ENCODE measurements at regions of chr1 and their contacts with region 1.

Region 1: GRCh38 chr1:52552505-52553361 is at the start of gene TUT4:
- DNase-seq: peak; percentile 94
- H3K4me3 ChIP-seq: peak within 1 kb of the TSS; percentile 83 to 99 (median 94)
- H3K27ac ChIP-seq: peak within 1 kb of the TSS; percentile 88 to 98 (median 91)
- H3K4me1 ChIP-seq: peaks cover 10 to 33% (median 31%) of the 10 kb centered on the region in 4 donors
- H3K27me3 ChIP-seq: no peaks in the 10 kb centered on the region
- CTCF ChIP-seq: peak in 1 of 3 experiments; percentile 11
- EP300 ChIP-seq: no peak
- POLR2A ChIP-seq: peak; percentile 13
- total RNA-seq, gene TUT4: 32.3 to 58.6 (median 42.7) TPM

Region 2: DNA sequence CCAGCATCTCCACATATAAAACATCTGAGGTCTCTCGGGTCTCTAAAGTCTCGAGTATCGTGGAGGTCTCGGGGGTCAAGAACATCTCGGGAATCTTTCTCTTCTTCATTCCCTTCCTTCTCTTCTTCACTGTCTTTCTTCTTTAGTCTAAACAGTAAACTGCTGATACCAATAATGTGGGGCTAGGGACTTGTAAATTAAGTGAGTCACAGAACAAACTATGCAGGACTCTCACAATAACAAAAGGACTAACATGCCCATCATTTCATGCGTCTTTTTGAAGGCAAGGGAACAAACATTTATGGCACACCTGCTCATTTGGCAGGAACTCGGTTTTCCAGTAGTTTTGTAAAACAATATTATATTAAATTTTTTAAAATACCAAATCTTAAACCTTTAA is 115.9 kb before region 1 on chr1:
- intact Hi-C with region 1: no loop called
- DNase-seq: no peak
- H3K4me3 ChIP-seq: no peak overlapping the region
- H3K27ac ChIP-seq: no peak overlapping the region
- H3K4me1 ChIP-seq: no peaks in the 10 kb centered on the region
- H3K27me3 ChIP-seq: no peaks in the 10 kb centered on the region
- CTCF ChIP-seq: no peak
- EP300 ChIP-seq: no peak
- POLR2A ChIP-seq: no peak

Region 3: GRCh38 chr1:52601991-52602855 is 49.5 kb after region 1 on chr1 and contains the start of gene GPX7:
- intact Hi-C with region 1: loop called (anchors 5 kb)
- DNase-seq: no peak
- H3K4me3 ChIP-seq: peak within 1 kb of the TSS; percentile 66 to 74 (median 69)
- H3K27ac ChIP-seq: peak within 1 kb of the TSS; percentile 81 to 87 (median 85)
- H3K4me1 ChIP-seq: peaks cover 21 to 37% (median 33%) of the 10 kb centered on the region in 4 donors
- H3K27me3 ChIP-seq: no peaks in the 10 kb centered on the region
- CTCF ChIP-seq: no peak
- EP300 ChIP-seq: no peak
- POLR2A ChIP-seq: no peak
- total RNA-seq, gene GPX7: 9.3 to 17.3 (median 16.4) TPM

Region 4: DNA sequence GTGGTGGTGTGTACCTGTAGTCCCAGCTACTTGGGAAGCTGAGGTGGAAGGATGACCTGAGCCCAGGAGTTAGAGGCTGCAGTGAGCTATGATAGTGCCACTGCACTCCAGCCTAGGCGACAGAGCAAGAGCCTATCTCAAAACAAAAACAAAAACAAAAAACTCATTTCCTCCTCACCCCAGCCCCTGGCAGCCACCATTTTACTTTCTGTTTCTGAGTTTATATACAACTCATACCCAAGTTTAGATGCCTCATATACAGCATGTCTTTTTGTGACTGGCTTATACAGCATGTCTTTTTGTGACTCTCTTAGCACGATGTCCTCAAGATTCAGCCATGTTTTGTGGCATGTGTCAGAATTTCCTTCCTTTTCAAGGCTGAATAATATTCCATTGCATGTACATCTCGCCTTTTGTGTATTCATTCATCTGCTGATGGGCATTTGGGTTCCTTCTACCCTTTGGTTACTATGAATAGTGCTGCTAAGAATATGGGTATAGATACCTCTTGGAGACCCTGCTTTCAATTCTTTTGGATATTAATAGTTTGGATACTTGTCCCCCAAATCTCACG is 130.7 kb after region 1 on chr1:
- intact Hi-C with region 1: loop called (anchors 10 kb)
- DNase-seq: no peak
- H3K4me3 ChIP-seq: no peak overlapping the region
- H3K27ac ChIP-seq: no peak overlapping the region
- H3K4me1 ChIP-seq: peaks cover 0 to 4% (median 2%) of the 10 kb centered on the region in 4 donors
- H3K27me3 ChIP-seq: no peaks in the 10 kb centered on the region
- CTCF ChIP-seq: no peak
- EP300 ChIP-seq: no peak
- POLR2A ChIP-seq: no peak

Measured in esophagus muscularis mucosa (tissue), 4 donors.